Cardiac septum (tissue), 1 donor: ENCODE measurements at regions of chr17 and their contacts with region 1.

Region 1: GRCh38 chr17:8222630-8223356 is 12.4 kb upstream of the AURKB start:
- DNase-seq: peak; percentile 97

Region 2: GRCh38 chr17:8118769-8119580 is 103.8 kb before region 1 on chr17:
- intact Hi-C with region 1: loop called (anchors 2 kb)
- DNase-seq: peak; percentile 93

Region 3: GRCh38 chr17:8248751-8249607 is 26.2 kb after region 1 on chr17 and contains the start of gene PFAS:
- intact Hi-C with region 1: loop called (anchors 2 kb)
- DNase-seq: peak; percentile 98
- total RNA-seq, gene PFAS: 11.2 TPM

Region 4: DNA sequence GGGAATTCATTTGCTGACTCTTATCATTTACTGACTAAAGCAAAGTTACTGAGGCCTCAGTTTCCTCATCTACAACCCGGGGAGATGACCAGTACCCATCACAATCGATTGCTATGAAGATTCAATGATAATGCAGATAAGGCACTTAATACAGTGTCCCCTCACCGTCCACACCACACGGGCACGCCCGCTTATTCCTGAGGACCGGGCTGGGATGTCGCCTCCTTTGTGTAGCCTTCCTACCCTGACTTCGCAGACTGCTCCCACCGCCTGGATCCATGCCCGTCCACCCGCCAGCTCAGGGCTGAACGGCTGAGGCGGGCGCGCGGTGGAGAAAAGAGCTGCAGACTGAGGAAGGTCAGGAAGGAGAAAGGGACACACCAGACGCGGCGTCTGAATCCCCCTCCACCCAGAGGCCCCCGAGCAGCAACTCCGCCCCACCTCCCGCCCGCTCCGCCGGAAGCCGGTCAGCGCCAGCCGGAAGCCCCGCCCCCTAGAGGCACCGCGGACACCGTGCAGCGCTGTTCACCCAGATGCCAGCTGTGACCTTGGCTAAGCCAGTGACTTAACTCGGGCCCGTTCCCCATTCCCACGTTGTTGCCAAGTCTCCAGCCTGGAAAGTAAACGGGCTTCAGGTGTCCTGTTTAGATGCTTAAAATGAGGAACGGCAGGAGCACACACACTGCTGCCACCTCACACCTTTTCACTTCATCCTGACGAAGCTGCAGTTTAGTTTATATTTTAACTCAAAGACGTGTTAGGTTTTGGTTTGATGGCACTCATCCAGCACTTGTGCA is 153.7 kb after region 1 on chr17 and contains the start of gene KRABD2:
- intact Hi-C with region 1: loop called (anchors 10 kb)
- DNase-seq: peak; percentile 96